ENCODE measurements at regions of chr20 and their contacts with region 1.

Region 1: GRCh38 chr20:45934586-45935415 is at the start of gene PCIF1:
- DNase-seq: peak; percentile 98
- ATAC-seq: peak; percentile 91
- H3K4me3 ChIP-seq: peak within 1 kb of the TSS; percentile 83 to 99 (median 98)
- H3K27ac ChIP-seq: peak within 1 kb of the TSS; percentile 97 to 100 (median 100)
- H3K4me1 ChIP-seq: peaks cover 21 to 25% of the 10 kb centered on the region in 2 donors
- H3K27me3 ChIP-seq: no peaks in the 10 kb centered on the region
- CTCF ChIP-seq: no peak
- POLR2A ChIP-seq: peak; percentile 95 to 96
- total RNA-seq, gene PCIF1: 32.1 to 51.2 (median 37.0) TPM

Region 2: DNA sequence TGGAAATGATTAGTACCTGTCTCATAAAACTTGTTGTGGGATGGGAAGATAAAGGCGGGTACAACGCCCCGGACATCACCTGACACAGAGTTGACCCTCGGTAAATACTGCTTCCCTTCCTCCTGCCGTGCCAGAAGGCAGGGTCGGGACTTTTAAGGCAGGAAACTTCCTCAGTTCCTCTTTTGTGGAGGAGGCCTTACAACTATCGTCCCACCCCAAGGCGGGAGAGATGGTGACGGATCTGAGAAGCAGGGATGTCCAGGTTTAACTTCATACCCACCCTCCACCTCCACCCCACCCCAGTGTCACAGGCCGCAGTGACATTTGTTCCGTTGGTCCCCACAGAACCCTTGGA is 142.5 kb before region 1 on chr20:
- in situ Hi-C with region 1: no loop called
- intact Hi-C with region 1: loop called (anchors 2 kb)
- DNase-seq: no peak
- ATAC-seq: no peak
- H3K4me3 ChIP-seq: peak overlapping the region; percentile 82 to 100 (median 97)
- H3K27ac ChIP-seq: peak overlapping the region; percentile 94 to 100 (median 97)
- H3K4me1 ChIP-seq: peaks cover 21 to 33% of the 10 kb centered on the region in 2 donors
- H3K27me3 ChIP-seq: no peaks in the 10 kb centered on the region
- CTCF ChIP-seq: no peak
- POLR2A ChIP-seq: no peak

Region 3: GRCh38 chr20:45823949-45824835 is 110.6 kb before region 1 on chr20:
- in situ Hi-C with region 1: no loop called
- intact Hi-C with region 1: loop called (anchors 2 kb)
- DNase-seq: peak; percentile 50 to 74
- ATAC-seq: peak in 1 of 2 donors; percentile 9
- H3K4me3 ChIP-seq: peak overlapping the region; percentile 27 to 63 (median 46)
- H3K27ac ChIP-seq: peak overlapping the region; percentile 95 to 97 (median 96)
- H3K4me1 ChIP-seq: peaks cover 55 to 60% of the 10 kb centered on the region in 2 donors
- H3K27me3 ChIP-seq: no peaks in the 10 kb centered on the region
- CTCF ChIP-seq: peak; percentile 23 to 68 (median 59)
- POLR2A ChIP-seq: no peak

Region 4: GRCh38 chr20:45880988-45881788 is 53.6 kb before region 1 on chr20 and contains the start of gene ZSWIM1:
- in situ Hi-C with region 1: no loop called
- intact Hi-C with region 1: loop called (anchors 2 kb)
- DNase-seq: peak; percentile 98 to 99
- ATAC-seq: peak; percentile 100
- H3K4me3 ChIP-seq: peak within 1 kb of the TSS; percentile 67 to 70 (median 68)
- H3K27ac ChIP-seq: peak within 1 kb of the TSS; percentile 87 to 95 (median 92)
- H3K4me1 ChIP-seq: peaks cover 9 to 13% of the 10 kb centered on the region in 2 donors
- H3K27me3 ChIP-seq: no peaks in the 10 kb centered on the region
- CTCF ChIP-seq: no peak
- POLR2A ChIP-seq: peak in 1 of 2 donors; percentile 45
- total RNA-seq, gene ZSWIM1: 5.7 to 8.5 (median 6.9) TPM

Region 5: DNA sequence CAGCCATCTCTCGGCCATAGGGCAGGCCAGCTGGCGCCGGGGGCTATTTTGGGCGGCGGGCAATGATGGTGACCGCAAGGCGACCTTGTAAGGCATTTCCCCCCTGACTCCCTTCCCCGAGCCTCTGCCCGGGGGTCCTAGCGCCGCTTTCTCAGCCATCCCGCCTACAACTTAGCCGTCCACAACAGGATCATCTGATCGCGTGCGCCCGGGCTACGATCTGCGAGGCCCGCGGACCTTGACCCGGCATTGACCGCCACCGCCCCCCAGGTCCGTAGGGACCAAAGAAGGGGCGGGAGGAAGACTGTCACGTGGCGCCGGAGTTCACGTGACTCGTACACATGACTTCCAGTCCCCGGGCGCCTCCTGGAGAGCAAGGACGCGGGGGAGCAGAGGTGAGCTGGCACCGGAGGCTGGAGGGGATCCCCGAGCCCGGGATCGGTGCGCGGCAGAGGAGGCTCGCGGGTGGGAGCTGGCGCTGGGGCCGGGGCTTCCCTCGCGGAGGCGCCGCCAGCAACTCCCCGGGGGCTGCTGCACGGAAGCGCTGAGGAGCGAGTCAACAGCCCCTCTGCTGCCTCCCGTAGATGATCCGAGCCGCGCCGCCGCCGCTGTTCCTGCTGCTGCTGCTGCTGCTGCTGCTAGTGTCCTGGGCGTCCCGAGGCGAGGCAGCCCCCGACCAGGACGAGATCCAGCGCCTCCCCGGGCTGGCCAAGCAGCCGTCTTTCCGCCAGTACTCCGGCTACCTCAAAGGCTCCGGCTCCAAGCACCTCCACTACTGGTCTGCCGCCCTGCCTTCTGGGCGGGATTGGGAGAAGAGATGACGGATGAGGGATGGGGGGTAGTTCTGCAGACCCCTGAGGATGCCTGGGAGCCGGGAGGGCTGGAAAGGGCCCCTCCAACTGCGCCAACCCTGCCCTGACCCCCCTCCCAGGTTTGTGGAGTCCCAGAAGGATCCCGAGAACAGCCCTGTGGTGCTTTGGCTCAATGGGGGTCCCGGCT is 43.5 kb before region 1 on chr20 and contains the starts of genes CTSA and NEURL2:
- in situ Hi-C with region 1: no loop called
- intact Hi-C with region 1: loop called (anchors 2 kb)
- DNase-seq: peak; percentile 90 to 93
- ATAC-seq: peak; percentile 89 to 91
- H3K4me3 ChIP-seq: peak within 1 kb of the TSS; percentile 76 to 96 (median 88)
- H3K27ac ChIP-seq: peak within 1 kb of the TSS; percentile 87 to 98 (median 96)
- H3K4me1 ChIP-seq: peaks cover 22 to 26% of the 10 kb centered on the region in 2 donors
- H3K27me3 ChIP-seq: no peaks in the 10 kb centered on the region
- CTCF ChIP-seq: peak in 3 of 5 experiments; percentile 16 to 27 (median 17)
- POLR2A ChIP-seq: peak; percentile 48 to 59
- total RNA-seq, gene CTSA: 21.9 to 59.2 (median 46.2) TPM
- total RNA-seq, gene NEURL2: 4.9 to 24.1 (median 10.2) TPM